ENCODE measurements at regions of chr17 and their contacts with region 1.

Region 1: DNA sequence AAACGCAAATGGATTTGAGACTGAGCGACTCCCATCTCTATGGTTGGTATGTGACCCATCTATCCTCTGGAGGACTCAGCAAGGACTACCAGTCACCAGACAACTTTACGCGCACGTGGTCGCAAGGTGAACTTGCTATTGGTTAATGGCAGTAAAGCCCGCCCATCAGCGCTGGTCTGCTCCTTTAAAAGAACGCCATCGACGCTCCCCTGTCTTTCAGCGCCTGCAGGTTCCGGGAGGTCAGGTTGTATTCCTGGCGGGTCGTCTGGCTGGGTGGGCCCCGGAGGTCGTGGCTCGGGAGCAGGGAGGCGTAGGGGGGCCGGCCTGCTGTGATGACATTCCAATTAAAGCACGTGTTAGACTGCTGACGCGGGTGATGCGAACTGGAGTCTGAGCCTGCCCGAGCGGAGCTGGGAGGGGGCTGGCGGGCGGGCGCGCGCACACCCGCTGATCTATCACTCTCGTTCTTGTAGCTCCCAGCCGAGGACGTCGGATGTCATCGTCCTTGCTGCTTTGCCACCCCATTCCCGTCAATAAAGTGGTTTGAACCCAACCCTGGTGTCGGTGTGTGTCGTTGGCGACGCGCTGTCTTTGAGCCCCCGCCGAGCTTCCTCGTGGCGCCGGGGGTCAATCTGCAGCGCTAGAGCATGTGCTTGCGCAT is 15.9 kb upstream of the ERN1 start:
- DNase-seq: peak; percentile 84
- ATAC-seq: peak; percentile 94
- H3K4me3 Mint-ChIP-seq: no peak overlapping the region
- H3K27ac Mint-ChIP-seq: no peak overlapping the region
- H3K4me1 Mint-ChIP-seq: peaks cover 16% of the 10 kb centered on the region
- H3K27me3 Mint-ChIP-seq: no peaks in the 10 kb centered on the region
- CTCF ChIP-seq: no peak

Region 2: DNA sequence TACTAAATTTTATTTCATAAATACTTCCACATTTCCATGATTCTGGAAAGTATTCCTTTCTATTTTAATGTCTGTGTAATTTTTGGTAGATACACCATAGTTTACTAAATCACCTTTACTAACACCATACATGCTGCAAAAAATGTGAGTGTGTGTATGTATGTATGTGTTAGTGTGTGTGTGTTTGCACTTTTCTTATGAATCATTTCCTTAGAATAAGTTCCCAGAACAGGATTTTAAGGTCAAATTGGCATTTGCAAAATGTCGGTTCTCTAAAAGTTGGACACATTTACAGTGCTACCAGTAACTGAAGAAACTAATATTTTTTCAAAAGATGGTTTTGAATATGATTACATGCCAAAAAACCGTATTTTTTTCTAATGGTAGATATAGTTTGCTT is 836.9 kb before region 1 on chr17:
- CTCF ChIA-PET with region 1: no interaction called
- POLR2A ChIA-PET with region 1: no interaction called
- intact Hi-C with region 1: no loop called
- DNase-seq: no peak
- ATAC-seq: no peak
- H3K4me3 Mint-ChIP-seq: no peak overlapping the region
- H3K27ac Mint-ChIP-seq: no peak overlapping the region
- H3K4me1 Mint-ChIP-seq: no peaks in the 10 kb centered on the region
- H3K27me3 Mint-ChIP-seq: no peaks in the 10 kb centered on the region
- CTCF ChIP-seq: no peak

Region 3: DNA sequence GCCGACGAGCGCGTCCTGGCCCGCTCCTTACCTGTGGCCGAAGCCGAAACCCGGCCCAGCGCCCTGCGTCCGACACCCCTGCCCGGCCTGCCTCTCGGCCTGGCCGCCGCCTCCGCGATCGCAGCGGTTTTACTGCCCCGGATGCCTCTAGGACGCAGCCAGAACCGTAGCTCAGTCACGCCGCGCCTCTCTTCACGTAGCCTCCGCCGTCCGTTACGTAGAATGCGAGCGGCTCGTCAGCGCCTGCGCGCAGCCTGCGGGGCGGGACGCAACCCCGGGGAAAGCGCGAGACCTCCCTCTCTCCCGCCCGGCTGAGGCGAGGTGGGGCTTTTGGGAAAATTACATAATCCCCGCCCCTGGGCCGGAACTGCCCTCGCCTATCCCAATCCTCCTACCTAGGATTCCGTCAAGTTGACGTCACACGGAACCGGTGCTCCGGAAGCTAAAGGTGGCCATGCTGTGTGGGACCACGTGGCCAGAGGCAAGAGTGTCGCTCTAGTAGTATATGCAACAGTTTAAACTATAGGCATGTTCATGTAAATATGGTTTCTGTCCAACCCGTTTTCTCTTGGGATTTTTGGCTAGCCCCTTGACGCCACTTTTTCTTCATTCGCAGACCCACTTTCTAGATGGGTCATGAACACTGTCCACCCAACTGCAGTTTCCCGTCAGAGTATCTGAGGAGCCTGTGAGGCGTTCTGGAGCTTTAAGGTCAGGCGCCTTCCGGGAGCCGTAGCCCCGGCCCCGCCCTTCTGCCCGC is 372.3 kb before region 1 on chr17 and contains the start of gene CCDC47:
- CTCF ChIA-PET with region 1: no interaction called
- POLR2A ChIA-PET with region 1: interaction called, 12 read pairs
- intact Hi-C with region 1: no loop called
- DNase-seq: peak; percentile 96
- ATAC-seq: peak; percentile 76
- H3K4me3 Mint-ChIP-seq: peak within 1 kb of the TSS; percentile 92
- H3K27ac Mint-ChIP-seq: peak within 1 kb of the TSS; percentile 99
- H3K4me1 Mint-ChIP-seq: peaks cover 59% of the 10 kb centered on the region
- H3K27me3 Mint-ChIP-seq: no peaks in the 10 kb centered on the region
- CTCF ChIP-seq: no peak
- total RNA-seq, gene CCDC47: 41.4 and 47.6 TPM in 2 replicates

Region 4: GRCh38 chr17:63946440-63947367 is 199.2 kb before region 1 on chr17:
- CTCF ChIA-PET with region 1: no interaction called
- POLR2A ChIA-PET with region 1: interaction called, 10 read pairs
- intact Hi-C with region 1: no loop called
- DNase-seq: peak; percentile 67
- ATAC-seq: peak; percentile 72
- H3K4me3 Mint-ChIP-seq: peak overlapping the region; percentile 74
- H3K27ac Mint-ChIP-seq: peak overlapping the region; percentile 91
- H3K4me1 Mint-ChIP-seq: peaks cover 47% of the 10 kb centered on the region
- H3K27me3 Mint-ChIP-seq: no peaks in the 10 kb centered on the region
- CTCF ChIP-seq: no peak

Region 5: GRCh38 chr17:64025732-64026294 is 120.1 kb before region 1 on chr17:
- CTCF ChIA-PET with region 1: interaction called, 11 read pairs
- POLR2A ChIA-PET with region 1: interaction called, 54 read pairs
- intact Hi-C with region 1: no loop called
- DNase-seq: peak; percentile 72
- ATAC-seq: peak; percentile 92
- H3K4me3 Mint-ChIP-seq: peak overlapping the region; percentile 73
- H3K27ac Mint-ChIP-seq: peak overlapping the region; percentile 62
- H3K4me1 Mint-ChIP-seq: peaks cover 42% of the 10 kb centered on the region
- H3K27me3 Mint-ChIP-seq: no peaks in the 10 kb centered on the region
- CTCF ChIP-seq: peak; percentile 80

Region 6: DNA sequence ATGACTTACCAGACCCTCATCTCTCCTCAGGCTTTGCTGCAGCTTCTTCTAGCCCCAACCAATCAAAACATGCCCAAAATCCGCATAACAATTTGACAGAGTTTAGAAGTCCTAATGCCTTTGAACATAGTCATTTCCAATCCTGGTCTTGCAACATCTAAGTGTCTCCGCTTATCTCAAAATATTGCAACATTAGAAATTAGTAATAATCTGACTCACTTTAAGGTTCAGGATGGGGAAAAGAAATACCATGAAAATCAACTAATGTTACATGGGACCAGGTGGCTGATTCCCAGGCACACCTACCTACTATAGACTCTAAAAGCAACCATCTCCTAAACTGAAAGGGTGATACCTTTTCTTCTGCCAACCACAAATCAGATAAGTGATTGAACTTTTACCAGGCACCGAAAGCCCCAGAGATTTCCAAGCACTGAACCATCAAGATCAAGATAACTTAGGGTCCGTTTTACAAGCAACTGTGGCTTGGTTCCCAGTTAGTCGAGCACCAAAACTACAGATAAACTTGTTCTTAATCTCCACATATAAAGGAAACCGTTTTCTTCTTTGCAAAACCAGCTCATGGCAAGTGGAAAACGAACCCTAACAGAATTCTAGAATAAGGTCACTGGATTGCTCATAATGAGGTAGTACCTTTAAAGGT is 29.9 kb before region 1 on chr17:
- CTCF ChIA-PET with region 1: no interaction called
- POLR2A ChIA-PET with region 1: no interaction called
- intact Hi-C with region 1: no loop called
- DNase-seq: no peak
- ATAC-seq: no peak
- H3K4me3 Mint-ChIP-seq: no peak overlapping the region
- H3K27ac Mint-ChIP-seq: no peak overlapping the region
- H3K4me1 Mint-ChIP-seq: peaks cover 15% of the 10 kb centered on the region
- H3K27me3 Mint-ChIP-seq: no peaks in the 10 kb centered on the region
- CTCF ChIP-seq: no peak

Region 7: DNA sequence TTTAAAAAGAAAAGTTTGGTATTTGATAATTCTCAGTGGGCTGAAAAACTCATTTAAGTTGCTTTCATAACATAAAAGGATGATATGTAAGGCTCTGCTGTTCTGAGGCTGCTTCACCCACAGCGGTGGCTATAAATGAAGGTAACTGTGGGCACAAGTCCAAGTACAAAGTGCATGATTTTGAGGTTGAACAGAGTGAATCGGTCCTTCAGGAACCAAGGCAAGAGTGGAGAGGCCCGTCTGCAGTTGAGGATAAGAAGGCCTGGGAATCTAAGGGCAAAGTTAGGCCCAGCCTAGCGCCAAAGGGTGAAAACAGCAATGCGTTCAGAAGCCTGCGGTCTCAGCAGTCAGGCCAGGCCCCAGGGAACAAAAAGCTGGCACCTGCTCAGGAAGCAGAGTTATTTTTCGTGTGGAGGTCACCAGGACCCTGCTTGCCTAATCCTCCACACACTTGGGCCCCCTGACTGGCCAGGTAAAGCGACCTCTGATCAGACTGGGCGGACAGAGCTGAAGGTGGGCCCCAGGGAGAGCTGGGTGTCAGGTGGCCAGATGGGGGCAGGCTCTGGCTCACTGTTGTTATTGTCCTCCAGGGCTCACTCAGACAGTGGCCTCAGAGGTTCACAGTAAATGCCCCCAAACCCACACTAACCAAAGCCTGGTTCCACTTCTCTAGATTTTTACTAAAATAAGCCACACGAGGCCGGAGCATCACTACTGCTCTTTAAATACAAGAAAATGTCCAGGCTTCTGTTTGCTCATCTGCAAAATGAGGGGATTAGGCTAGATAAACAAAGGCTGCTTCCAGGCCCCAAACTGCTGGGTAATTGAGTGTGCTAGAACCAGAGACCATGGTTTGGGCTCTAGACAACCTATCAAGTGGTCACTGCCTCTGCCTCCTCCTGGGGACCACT is 70.7 kb after region 1 on chr17:
- CTCF ChIA-PET with region 1: no interaction called
- POLR2A ChIA-PET with region 1: interaction called, 48 read pairs
- intact Hi-C with region 1: loop called (anchors 5 kb)
- DNase-seq: peak; percentile 17
- ATAC-seq: peak; percentile 63
- H3K4me3 Mint-ChIP-seq: peak overlapping the region; percentile 32
- H3K27ac Mint-ChIP-seq: peak overlapping the region; percentile 76
- H3K4me1 Mint-ChIP-seq: peaks cover 31% of the 10 kb centered on the region
- H3K27me3 Mint-ChIP-seq: no peaks in the 10 kb centered on the region
- CTCF ChIP-seq: no peak

Region 8: DNA sequence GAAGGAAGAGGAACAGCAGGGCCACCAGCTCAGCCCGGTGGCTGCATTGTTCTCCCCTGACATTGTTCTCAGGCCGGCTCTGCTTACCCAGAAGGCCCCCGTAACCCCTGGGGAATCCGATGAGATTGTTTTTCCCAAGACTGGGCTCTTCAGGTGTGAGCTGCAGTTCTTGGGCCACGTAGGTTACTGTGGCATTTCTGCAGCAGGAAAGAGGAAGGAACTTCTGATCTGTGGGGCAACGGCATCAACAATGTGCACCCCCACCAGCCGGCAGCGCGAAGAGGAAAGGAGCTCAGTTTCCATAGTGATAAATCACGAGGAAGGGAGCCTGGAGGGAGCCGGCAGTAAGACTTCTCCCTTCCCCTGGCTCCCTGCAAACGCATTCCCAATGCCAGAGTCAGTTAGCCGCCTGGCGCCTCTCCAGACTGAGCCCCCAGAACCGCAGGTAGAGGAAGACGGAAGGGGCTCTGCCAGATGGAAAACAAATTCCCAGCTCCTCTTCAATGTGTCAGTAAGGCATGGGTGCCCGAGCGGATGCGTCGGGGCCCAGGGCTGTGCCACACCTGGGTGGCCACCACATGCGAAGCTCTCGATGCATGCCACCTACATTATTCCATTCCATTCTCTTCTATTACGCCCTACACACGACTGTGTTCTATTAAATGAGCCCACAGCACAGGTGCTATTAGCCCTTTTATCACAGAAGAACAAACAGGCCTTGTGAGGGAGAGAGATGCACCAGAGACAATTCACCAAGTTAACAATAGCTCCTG is 266.3 kb after region 1 on chr17:
- CTCF ChIA-PET with region 1: no interaction called
- POLR2A ChIA-PET with region 1: interaction called, 8 read pairs
- intact Hi-C with region 1: loop called (anchors 5 kb)
- DNase-seq: peak; percentile 48
- ATAC-seq: peak; percentile 65
- H3K4me3 Mint-ChIP-seq: peak overlapping the region; percentile 83
- H3K27ac Mint-ChIP-seq: peak overlapping the region; percentile 94
- H3K4me1 Mint-ChIP-seq: peaks cover 57% of the 10 kb centered on the region
- H3K27me3 Mint-ChIP-seq: no peaks in the 10 kb centered on the region
- CTCF ChIP-seq: no peak

Region 9: DNA sequence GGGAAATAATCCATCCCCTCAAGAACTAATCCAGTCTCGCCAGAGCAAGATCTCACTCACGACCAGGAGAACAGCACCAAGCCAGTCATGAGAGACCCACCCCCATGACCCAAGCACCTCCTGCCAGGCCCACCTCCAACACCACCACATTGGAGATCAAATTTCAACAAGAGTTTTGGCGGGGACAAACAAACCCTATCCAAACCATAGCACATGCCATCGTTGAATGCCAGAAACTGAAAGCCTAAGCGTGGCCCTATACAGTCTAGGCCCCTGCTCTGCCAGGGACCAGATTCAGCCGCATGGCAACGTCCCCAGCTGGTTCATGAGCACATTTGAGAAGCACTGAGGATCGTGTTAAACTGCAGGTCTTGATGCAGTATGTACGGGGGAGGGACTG is 1358.3 kb after region 1 on chr17:
- CTCF ChIA-PET with region 1: no interaction called
- POLR2A ChIA-PET with region 1: no interaction called
- intact Hi-C with region 1: no loop called
- DNase-seq: no peak
- ATAC-seq: no peak
- H3K4me3 Mint-ChIP-seq: no peak overlapping the region
- H3K27ac Mint-ChIP-seq: no peak overlapping the region
- H3K4me1 Mint-ChIP-seq: no peaks in the 10 kb centered on the region
- H3K27me3 Mint-ChIP-seq: peaks cover 4% of the 10 kb centered on the region
- CTCF ChIP-seq: no peak

Measured in activated B cell treated with CpG ODN at 0.5 μM for 24 hours (primary cell).